ENCODE measurements at regions of chr1 and their contacts with region 1.

Region 1: DNA sequence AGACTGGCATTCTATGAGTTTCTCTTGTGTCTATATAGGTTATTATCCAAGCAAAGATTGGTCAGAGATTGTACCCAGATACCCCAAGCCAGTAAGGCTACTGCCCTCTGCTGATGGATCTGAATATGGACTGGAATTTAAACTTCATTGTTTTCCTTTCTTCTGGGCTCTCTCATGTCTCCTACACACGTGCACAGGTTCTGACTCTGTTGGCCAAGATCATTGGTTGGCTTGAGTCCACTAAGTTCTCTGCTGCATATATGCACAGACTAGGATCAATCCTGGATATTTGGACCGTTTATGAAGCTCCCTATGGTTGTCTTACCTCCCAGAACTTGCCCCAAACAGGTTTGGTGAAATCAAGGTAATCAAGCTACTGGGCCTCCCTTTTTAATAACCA is 69.7 kb downstream of the CC2D1B start:
- DNase-seq: peak; percentile 13
- H3K4me3 Mint-ChIP-seq: no peak overlapping the region
- H3K27ac Mint-ChIP-seq: peak overlapping the region; percentile 39
- H3K4me1 Mint-ChIP-seq: peaks cover 2% of the 10 kb centered on the region
- H3K27me3 Mint-ChIP-seq: no peaks in the 10 kb centered on the region

Region 2: DNA sequence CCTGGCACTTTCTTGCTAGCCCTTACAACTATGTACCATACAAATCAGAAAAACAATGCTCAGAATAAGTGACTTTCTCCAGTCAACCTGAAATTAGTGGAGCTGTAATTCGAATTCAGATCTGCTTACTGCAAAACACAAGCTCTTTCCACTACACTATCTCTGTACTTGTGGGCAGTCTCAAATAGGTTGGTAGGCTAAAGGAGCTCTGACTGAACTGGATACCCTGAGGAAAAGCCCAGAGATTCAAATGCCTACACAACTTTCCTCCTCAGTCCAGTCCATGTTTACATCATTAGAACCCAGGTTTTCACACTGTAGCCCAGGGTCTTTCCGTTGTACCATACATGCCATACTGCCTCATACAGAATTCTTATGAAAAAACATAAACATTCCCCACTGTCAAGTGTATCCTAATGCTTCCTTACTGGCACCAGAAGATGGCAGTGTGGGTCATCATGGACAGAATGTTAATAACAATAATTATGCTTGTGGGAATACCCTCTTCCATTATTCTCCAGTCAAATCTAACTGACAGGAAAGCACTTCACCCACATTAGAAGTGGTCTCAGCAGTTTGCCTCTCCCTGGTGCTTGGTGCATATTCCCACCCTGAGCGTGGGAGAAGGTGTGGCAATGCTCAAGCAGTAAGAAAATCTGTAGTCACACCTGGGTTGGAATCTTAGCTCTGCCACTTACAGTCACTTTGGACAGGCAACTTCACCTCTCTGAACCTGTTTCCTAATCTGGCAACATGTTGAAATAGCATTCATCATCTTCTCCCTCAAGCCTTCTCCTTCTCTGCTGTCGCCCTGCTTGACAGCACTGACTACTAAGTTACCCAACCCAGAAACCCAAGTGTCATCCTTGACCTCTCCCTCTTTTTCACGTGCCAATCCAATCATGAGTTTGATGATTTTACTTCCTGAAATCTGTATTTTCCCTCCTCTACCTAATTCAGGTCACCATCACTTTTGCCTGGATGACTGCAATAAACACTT is 168.9 kb before region 1 on chr1:
- CTCF ChIA-PET with region 1: interaction called, 51 read pairs
- intact Hi-C with region 1: loop called (anchors 1 kb)
- DNase-seq: peak; percentile 59
- H3K4me3 Mint-ChIP-seq: no peak overlapping the region
- H3K27ac Mint-ChIP-seq: no peak overlapping the region
- H3K4me1 Mint-ChIP-seq: peaks cover 16% of the 10 kb centered on the region
- H3K27me3 Mint-ChIP-seq: peaks cover 11% of the 10 kb centered on the region

Region 3: DNA sequence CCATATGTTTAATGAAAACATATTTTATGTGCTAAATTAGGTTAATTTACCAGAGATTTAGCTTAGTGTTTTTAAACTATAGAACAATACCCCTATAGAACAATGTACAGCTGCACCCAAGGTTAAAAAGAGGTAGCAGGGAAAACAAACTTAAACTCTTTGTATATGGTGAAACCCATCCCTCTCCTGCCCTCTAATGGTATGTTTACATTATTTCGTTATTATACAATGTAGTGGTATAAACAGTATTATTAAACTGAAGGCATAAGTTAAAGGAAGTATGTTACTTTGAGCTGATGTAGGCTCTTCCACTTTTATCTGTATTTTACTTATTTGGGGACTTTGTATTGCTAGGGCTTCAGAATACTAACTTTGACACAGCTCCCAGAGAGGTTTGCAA is 529.5 kb after region 1 on chr1:
- CTCF ChIA-PET with region 1: no interaction called
- intact Hi-C with region 1: no loop called
- DNase-seq: no peak
- H3K4me3 Mint-ChIP-seq: no peak overlapping the region
- H3K27ac Mint-ChIP-seq: no peak overlapping the region
- H3K4me1 Mint-ChIP-seq: no peaks in the 10 kb centered on the region
- H3K27me3 Mint-ChIP-seq: no peaks in the 10 kb centered on the region